ENCODE measurements at regions of chr6 and their contacts with region 1.

Region 1: GRCh38 chr6:111642463-111643158 is 36.9 kb upstream of the TRAF3IP2 start:
- DNase-seq: peak; percentile 73
- H3K4me3 Mint-ChIP-seq: no peak overlapping the region
- H3K27ac Mint-ChIP-seq: no peak overlapping the region
- H3K4me1 Mint-ChIP-seq: no peaks in the 10 kb centered on the region
- H3K27me3 Mint-ChIP-seq: no peaks in the 10 kb centered on the region
- CTCF ChIP-seq: peak; percentile 35

Region 2: DNA sequence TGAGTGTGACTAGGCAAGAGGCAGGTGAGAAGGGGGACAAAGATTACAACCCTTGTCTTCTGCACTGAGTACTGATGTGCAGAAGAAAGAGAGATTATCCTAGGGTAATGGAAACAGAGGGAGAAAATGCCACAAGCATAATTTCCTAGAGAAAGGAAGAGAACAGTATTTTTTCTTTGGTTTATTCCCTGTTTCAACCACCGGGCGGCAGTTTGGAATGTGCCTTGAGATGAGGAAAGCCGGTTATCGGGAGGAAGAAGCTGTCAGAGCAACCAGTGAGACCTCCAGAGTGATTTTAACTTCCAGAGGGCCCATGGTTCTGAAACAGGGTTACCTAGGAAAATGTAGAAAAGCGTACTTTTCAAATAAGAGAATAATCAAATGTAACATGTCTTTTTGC is 281.0 kb before region 1 on chr6:
- CTCF ChIA-PET with region 1: no interaction called
- intact Hi-C with region 1: loop called (anchors 10 kb)
- DNase-seq: peak; percentile 35
- H3K4me3 Mint-ChIP-seq: no peak overlapping the region
- H3K27ac Mint-ChIP-seq: no peak overlapping the region
- H3K4me1 Mint-ChIP-seq: peaks cover 28% of the 10 kb centered on the region
- H3K27me3 Mint-ChIP-seq: no peaks in the 10 kb centered on the region
- CTCF ChIP-seq: no peak

Region 3: DNA sequence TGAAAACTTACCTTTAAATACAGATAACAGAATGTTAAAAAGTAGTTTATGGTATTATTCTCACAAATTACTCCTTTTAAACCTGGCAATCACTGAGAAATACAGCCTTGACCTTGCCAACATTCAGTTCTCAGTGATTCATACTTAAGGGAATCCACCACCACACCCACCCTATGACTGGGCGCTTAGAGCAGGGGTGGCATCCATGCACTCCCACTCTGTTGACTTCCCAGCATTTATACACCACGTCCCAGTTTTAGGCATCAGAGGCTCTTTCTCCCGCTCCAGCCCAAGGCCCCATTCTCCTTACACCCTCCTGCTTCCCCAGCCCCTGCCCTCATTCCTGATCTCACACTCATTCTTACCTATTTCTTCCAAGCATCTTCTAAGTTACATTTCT is 53.2 kb before region 1 on chr6:
- CTCF ChIA-PET with region 1: interaction called, 3 read pairs
- intact Hi-C with region 1: loop called (anchors 5 kb)
- DNase-seq: peak; percentile 69
- H3K4me3 Mint-ChIP-seq: peak overlapping the region; percentile 4
- H3K27ac Mint-ChIP-seq: peak overlapping the region; percentile 48
- H3K4me1 Mint-ChIP-seq: peaks cover 77% of the 10 kb centered on the region
- H3K27me3 Mint-ChIP-seq: no peaks in the 10 kb centered on the region
- CTCF ChIP-seq: no peak

Region 4: DNA sequence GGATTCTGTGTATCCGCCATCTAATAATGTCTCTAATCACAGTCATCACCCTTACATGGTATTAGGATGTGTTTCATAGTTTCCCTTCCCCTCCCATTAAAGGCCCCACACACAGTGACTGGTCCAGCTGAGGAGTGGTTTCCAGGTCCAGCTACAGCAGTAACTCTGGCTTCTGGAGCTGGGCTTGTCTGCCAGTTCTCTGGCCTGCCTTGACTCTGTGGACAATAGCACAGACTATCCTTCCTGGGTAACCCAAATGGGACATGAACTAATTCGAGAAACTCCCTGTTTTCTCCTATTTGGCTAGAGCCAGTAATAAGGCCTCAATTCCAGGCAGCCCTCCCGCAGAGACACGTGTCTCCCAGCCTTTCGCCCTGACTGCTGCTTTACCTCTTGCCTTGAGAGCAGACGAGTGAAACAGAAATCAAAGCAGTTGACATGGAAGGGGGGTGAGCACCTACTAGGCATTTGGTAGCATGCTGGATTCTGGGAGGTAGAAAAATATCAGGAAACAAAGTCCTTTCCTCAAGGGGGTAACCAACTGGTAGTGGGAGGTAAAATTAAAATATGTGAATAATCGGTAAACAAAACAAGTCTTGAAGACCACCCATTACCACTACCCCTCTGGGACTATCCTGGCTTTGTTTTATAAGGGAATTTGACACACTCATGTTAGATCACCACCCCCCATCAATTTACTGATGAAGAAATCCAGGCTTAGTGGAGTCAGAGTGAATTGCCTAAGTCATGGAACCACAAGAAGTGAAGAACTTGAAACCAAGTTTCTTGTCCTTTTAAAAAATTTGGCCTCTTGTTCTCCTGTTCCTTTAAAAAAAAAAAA is 38.1 kb before region 1 on chr6:
- CTCF ChIA-PET with region 1: interaction called, 9 read pairs
- intact Hi-C with region 1: loop called (anchors 5 kb)
- DNase-seq: peak; percentile 35
- H3K4me3 Mint-ChIP-seq: peak overlapping the region; percentile 96
- H3K27ac Mint-ChIP-seq: peak overlapping the region; percentile 98
- H3K4me1 Mint-ChIP-seq: peaks cover 49% of the 10 kb centered on the region
- H3K27me3 Mint-ChIP-seq: no peaks in the 10 kb centered on the region
- CTCF ChIP-seq: no peak

Measured in Calu3 (cell line).